ENCODE measurements at regions of chr1 and their contacts with region 1.

Region 1: GRCh38 chr1:110879758-110880606 is 7.0 kb downstream of the CD53 start:
- DNase-seq: peak; percentile 74
- H3K4me3 Mint-ChIP-seq: peak overlapping the region; percentile 78
- H3K27ac Mint-ChIP-seq: peak overlapping the region; percentile 99
- H3K4me1 Mint-ChIP-seq: peaks cover 84% of the 10 kb centered on the region
- H3K27me3 Mint-ChIP-seq: no peaks in the 10 kb centered on the region

Region 2: DNA sequence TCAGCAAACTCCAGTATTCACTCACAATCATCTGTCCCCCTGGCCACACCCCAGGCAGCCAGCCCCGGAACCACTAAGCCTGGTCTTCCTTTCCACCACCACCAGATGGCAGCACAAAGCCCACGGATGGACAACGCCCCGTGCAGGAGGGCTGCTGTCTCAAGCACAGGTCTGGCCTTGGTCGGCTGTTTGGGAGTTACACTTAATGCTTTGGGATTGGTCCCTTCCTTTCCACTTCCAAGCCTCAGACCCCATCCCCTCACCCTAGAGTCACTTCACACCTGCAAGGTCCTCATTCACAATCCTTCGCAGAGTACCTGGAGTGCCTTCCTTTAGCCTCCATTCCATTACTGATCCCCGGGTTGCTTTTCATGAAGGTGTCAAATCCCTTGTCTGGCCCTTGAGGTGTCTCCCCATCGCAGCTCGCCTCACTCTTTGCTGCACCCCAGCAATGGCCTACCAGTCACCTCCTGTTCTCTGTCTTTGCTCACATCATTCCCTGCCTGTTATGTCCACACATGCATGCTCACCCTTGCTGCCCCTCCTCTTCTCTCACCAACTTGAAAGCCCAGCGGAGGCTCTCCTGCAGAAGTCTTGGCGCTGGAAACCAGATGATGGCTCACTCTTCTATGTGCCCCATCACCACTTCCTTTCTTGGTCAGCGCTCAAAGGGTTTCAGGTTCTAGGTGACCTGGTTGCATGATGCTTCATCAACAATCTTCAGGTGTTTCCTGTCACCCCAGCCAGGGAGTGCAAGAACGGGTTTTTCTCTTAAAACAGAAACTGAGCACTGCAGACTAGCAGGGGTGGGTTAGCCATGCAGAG is 248.9 kb before region 1 on chr1:
- intact Hi-C with region 1: loop called (anchors 2 kb)
- DNase-seq: peak; percentile 84
- H3K4me3 Mint-ChIP-seq: no peak overlapping the region
- H3K27ac Mint-ChIP-seq: no peak overlapping the region
- H3K4me1 Mint-ChIP-seq: peaks cover 67% of the 10 kb centered on the region
- H3K27me3 Mint-ChIP-seq: no peaks in the 10 kb centered on the region

Region 3: GRCh38 chr1:110674337-110675059 is 205.5 kb before region 1 on chr1 and contains the start of gene KCNA3:
- intact Hi-C with region 1: loop called (anchors 1 kb)
- DNase-seq: peak; percentile 68
- H3K4me3 Mint-ChIP-seq: peak within 1 kb of the TSS; percentile 100
- H3K27ac Mint-ChIP-seq: peak within 1 kb of the TSS; percentile 92
- H3K4me1 Mint-ChIP-seq: peaks cover 67% of the 10 kb centered on the region
- H3K27me3 Mint-ChIP-seq: no peaks in the 10 kb centered on the region
- total RNA-seq, gene KCNA3: 38.1 and 42.2 TPM in 2 replicates

Region 4: DNA sequence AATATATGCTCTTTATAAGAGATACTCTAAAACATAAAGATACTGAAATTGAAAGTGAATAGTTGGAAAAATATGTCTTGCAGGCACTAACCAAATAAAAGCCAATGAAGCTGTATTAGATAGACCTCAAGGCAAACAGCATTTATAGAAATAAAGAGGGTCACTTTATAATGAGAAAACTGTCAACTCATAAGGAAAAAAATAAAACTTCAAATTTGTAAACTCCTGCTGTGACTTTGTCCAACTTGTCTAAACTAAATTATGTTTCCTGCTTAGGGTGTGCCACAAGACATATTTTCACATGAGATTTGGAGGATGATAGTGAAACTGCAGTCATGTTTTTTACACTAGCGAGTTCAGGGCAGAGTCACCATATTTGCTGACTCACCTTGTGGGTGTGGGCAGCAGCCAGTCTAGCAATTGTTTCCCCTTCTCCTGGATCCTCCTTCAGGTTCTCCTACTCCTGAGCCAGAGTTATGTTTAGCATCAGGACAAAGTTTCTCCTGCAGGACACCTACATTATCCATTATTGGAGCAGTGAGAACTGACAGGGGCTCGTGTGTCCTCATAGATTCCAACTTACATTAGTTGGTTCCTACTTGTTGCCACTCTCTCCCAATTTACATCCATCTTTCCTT is 36.8 kb after region 1 on chr1:
- intact Hi-C with region 1: loop called (anchors 1 kb)
- DNase-seq: peak; percentile 36
- H3K4me3 Mint-ChIP-seq: peak overlapping the region; percentile 56
- H3K27ac Mint-ChIP-seq: peak overlapping the region; percentile 71
- H3K4me1 Mint-ChIP-seq: peaks cover 19% of the 10 kb centered on the region
- H3K27me3 Mint-ChIP-seq: peaks cover 2% of the 10 kb centered on the region

Region 5: GRCh38 chr1:111203681-111204200 is 323.8 kb after region 1 on chr1:
- intact Hi-C with region 1: loop called (anchors 5 kb)
- DNase-seq: peak; percentile 80
- H3K4me3 Mint-ChIP-seq: peak overlapping the region; percentile 100
- H3K27ac Mint-ChIP-seq: peak overlapping the region; percentile 92
- H3K4me1 Mint-ChIP-seq: peaks cover 59% of the 10 kb centered on the region
- H3K27me3 Mint-ChIP-seq: no peaks in the 10 kb centered on the region

Region 6: DNA sequence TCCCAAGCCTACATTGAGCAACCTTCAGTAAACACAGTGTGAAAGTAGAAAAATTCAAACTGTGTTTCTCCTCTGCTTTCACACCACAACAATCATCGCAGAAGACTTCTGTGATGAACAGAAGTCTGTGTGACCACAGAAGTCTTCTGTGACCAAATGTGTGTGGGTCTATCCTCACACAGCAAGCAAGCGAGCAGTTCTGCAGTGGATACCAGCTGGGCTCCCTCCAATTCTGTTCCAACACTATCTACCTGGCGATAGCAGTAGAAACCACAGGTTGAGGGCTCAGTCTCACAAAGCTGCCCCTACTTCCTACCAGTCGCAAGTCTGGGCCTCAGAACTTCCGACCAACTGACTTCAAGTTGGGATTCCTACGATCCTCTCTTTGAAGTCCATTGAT is 718.6 kb after region 1 on chr1:
- intact Hi-C with region 1: loop called (anchors 1 kb)
- DNase-seq: peak; percentile 39
- H3K4me3 Mint-ChIP-seq: peak overlapping the region; percentile 46
- H3K27ac Mint-ChIP-seq: peak overlapping the region; percentile 99
- H3K4me1 Mint-ChIP-seq: peaks cover 96% of the 10 kb centered on the region
- H3K27me3 Mint-ChIP-seq: no peaks in the 10 kb centered on the region

Region 7: DNA sequence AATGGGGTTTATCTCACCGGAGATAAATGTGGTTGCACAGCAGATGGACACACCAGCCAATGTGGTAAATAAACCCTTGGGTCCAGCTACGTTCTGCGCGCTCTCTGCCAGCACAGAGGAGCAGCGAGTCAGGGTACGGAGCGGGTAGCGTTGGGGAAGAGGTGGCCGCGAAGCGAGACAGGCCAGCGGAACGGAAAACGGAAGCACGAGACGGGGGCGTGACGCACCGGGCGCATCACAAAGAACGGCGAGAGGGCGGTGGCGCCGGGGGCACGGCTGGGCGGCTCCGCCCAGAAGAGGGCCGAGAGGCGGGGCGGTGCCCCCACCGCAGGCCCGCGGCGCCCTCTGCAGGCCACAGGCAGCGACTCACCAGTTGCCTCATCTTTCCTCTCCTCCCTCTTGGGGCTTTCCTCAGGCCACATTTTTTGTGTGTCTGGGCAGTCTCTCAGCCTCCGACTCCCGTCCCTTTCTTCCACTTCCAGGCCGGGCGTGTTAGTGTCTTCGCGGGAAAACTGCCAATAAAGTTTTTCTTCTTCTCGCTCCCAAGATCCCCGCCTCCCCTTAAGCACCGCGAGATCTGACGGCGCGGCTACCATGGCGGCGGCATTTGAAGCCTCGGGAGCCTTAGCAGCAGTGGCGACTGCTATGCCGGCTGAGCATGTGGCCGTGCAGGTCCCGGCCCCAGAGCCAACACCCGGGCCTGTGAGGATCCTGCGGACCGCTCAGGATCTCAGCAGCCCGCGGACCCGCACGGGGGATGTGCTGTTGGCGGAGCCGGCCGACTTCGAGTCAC is 875.5 kb after region 1 on chr1 and contains the start of gene DDX20:
- intact Hi-C with region 1: loop called (anchors 5 kb)
- DNase-seq: peak; percentile 92
- H3K4me3 Mint-ChIP-seq: peak within 1 kb of the TSS; percentile 83
- H3K27ac Mint-ChIP-seq: peak within 1 kb of the TSS; percentile 97
- H3K4me1 Mint-ChIP-seq: peaks cover 35% of the 10 kb centered on the region
- H3K27me3 Mint-ChIP-seq: peaks cover 12% of the 10 kb centered on the region
- total RNA-seq, gene DDX20: 21.5 and 25.2 TPM in 2 replicates